ENCODE measurements at regions of chr12 and their contacts with region 1.

Region 1: DNA sequence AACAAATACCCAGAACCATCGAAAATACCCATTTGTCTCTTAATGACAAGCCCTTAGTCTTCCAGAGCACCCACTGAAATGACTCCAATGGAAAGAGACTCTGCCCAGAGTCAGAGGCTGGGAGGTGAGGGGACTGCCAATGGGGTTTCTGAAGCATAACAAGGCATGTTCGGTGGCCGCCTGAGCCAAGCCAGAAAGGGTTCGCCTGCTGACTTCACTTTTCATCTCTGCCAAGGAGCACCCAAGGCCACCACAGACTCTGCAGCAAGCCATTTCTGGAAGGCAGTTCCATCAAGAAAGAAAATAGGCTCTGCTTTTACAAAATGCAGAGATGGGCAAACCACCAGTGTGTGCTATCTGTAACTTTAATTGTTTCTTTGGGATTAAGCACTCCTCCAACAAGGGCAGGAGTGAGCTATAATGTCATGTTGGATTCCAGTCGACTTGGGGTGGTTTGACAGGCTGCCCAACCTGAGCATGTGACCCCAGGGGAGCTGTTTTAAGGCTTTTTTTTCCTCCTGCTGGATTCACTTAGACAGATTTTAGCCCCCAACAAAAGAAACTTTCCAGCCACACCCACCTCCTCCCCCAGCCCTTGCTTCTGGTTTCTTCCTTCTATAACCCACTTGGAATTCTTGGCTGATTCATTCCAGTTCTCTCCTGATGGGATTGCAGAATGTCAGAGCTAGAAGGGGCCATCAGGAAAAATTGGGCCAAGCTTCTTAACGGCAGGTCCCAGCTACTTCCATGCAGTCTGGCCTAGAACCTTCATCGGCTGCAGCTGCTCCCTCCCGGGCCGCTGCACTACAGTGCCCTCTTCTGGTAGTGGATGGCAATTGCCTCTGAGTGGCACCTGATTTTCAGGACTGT is 24.1 kb downstream of the CKAP4 start:
- DNase-seq: no peak
- H3K4me3 ChIP-seq: no peak overlapping the region
- H3K27me3 ChIP-seq: no peaks in the 10 kb centered on the region
- CTCF ChIP-seq: peak; percentile 98

Region 2: GRCh38 chr12:104846056-104846767 is 1377.5 kb before region 1 on chr12:
- CTCF ChIA-PET with region 1: no interaction called
- POLR2A ChIA-PET with region 1: no interaction called
- DNase-seq: no peak
- H3K4me3 ChIP-seq: no peak overlapping the region
- H3K27me3 ChIP-seq: no peaks in the 10 kb centered on the region
- CTCF ChIP-seq: no peak

Region 3: GRCh38 chr12:105084251-105085250 is 1139.2 kb before region 1 on chr12 and contains the start of gene ALDH1L2:
- CTCF ChIA-PET with region 1: no interaction called
- POLR2A ChIA-PET with region 1: interaction called, 14 read pairs
- DNase-seq: peak; percentile 29
- H3K4me3 ChIP-seq: peak within 1 kb of the TSS; percentile 94
- H3K27me3 ChIP-seq: no peaks in the 10 kb centered on the region
- CTCF ChIP-seq: no peak
- polyA plus RNA-seq, gene ALDH1L2: 76.1 and 129 TPM in 2 replicates

Region 4: GRCh38 chr12:106010741-106011140 is 213.0 kb before region 1 on chr12:
- CTCF ChIA-PET with region 1: no interaction called
- POLR2A ChIA-PET with region 1: no interaction called
- DNase-seq: peak; percentile 39
- H3K4me3 ChIP-seq: no peak overlapping the region
- H3K27me3 ChIP-seq: no peaks in the 10 kb centered on the region
- CTCF ChIP-seq: no peak

Region 5: GRCh38 chr12:106246891-106247673 is 23.4 kb after region 1 on chr12:
- CTCF ChIA-PET with region 1: interaction called, 17 read pairs
- POLR2A ChIA-PET with region 1: no interaction called
- DNase-seq: no peak
- H3K4me3 ChIP-seq: peak overlapping the region; percentile 82
- H3K27me3 ChIP-seq: no peaks in the 10 kb centered on the region
- CTCF ChIP-seq: 0 out of 2 replicates have a peak, but pooled peaks have one; percentile 7

Region 6: DNA sequence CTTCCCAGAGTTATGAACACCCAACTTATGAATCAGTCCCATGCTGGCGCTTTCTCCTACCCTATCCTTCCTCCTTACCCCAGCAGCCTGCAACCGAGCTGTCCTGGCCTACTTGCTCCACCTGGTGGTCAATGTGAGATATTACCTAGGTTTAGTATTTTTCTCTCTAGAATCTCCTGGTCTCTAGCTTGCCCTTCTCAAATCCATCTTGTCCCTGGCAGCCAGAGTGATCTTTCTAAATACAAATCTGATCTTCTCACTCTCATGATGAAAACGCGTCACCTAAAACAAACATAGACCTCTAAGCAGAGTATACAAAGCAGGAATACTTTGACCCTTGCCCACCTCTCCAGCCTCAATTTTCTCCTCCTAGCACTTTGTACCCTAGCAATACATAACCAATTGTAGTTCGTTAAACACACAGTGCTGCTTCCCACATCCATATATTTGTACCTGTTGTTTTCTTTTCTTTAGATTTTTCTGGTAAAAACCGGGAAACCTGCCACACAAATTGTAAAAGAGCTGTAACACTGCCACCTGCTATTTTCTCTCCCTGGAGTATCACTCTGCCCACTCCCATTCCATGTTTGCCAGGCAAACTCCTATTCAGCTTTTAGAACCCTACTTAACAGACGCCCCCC is 58.9 kb after region 1 on chr12:
- CTCF ChIA-PET with region 1: interaction called, 153 read pairs
- POLR2A ChIA-PET with region 1: no interaction called
- DNase-seq: no peak
- H3K4me3 ChIP-seq: no peak overlapping the region
- H3K27me3 ChIP-seq: peaks cover 2% of the 10 kb centered on the region
- CTCF ChIP-seq: peak; percentile 77

Region 7: GRCh38 chr12:106357549-106358395 is 134.1 kb after region 1 on chr12 and contains the start of gene POLR3B:
- CTCF ChIA-PET with region 1: interaction called, 14 read pairs
- POLR2A ChIA-PET with region 1: no interaction called
- DNase-seq: peak; percentile 64
- H3K4me3 ChIP-seq: peak within 1 kb of the TSS; percentile 77
- H3K27me3 ChIP-seq: no peaks in the 10 kb centered on the region
- CTCF ChIP-seq: peak; percentile 94
- polyA plus RNA-seq, gene POLR3B: 6.4 and 11.1 TPM in 2 replicates